PC-9 (cell line): ENCODE measurements at regions of chr6 and their contacts with region 1.

Region 1: GRCh38 chr6:83914953-83915352 is 55.5 kb downstream of the CYB5R4 start:
- DNase-seq: no peak
- H3K4me3 ChIP-seq: no peak overlapping the region
- H3K27ac ChIP-seq: no peak overlapping the region
- H3K4me1 ChIP-seq: no peaks in the 10 kb centered on the region
- H3K27me3 ChIP-seq: no peaks in the 10 kb centered on the region
- CTCF ChIP-seq: no peak

Region 2: DNA sequence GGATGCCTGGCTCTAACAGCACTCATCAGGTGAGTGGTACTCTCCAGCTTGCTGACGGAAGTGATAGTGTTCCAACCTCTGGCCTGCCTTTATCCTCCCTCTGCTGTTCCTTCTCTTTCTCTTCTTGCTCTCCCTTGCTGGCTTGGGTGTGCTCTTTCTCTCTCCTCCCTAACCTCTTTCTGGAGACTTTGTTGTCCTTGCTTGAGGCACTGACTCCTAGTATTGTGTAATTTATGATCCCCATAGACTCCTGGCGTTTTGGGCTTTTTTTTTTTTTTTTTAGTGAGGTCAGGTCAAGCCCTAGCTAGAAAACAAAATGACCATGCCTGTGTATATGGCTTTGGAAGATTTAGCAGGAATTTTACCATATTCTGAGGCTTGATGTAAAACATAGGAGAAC is 33.9 kb after region 1 on chr6:
- CTCF ChIA-PET with region 1: no interaction called
- POLR2A ChIA-PET with region 1: interaction called, 10 read pairs
- intact Hi-C with region 1: no loop called
- DNase-seq: no peak
- H3K4me3 ChIP-seq: no peak overlapping the region
- H3K27ac ChIP-seq: no peak overlapping the region
- H3K4me1 ChIP-seq: no peaks in the 10 kb centered on the region
- H3K27me3 ChIP-seq: no peaks in the 10 kb centered on the region
- CTCF ChIP-seq: no peak